HCT116 (cell line): ENCODE measurements at regions of chr5 and their contacts with region 1.

Region 1: GRCh38 chr5:116947691-116948528 is 373.3 kb upstream of the SEMA6A start:
- DNase-seq: peak; percentile 80
- ATAC-seq: peak; percentile 100
- H3K4me3 ChIP-seq: peak overlapping the region in 1 of 2 experiments; percentile 28; a peak in 1 of 4 replicates
- H3K27ac ChIP-seq: no peak overlapping the region
- H3K4me1 ChIP-seq: peaks cover 0 to 9% of the 10 kb centered on the region in 2 experiments; a peak in 2 of 4 replicates
- H3K27me3 ChIP-seq: no peaks in the 10 kb centered on the region
- CTCF ChIP-seq: peak; percentile 76 to 88 (median 85)
- POLR2A ChIP-seq: no peak
- RAD21 ChIP-seq: peak; percentile 85

Region 2: DNA sequence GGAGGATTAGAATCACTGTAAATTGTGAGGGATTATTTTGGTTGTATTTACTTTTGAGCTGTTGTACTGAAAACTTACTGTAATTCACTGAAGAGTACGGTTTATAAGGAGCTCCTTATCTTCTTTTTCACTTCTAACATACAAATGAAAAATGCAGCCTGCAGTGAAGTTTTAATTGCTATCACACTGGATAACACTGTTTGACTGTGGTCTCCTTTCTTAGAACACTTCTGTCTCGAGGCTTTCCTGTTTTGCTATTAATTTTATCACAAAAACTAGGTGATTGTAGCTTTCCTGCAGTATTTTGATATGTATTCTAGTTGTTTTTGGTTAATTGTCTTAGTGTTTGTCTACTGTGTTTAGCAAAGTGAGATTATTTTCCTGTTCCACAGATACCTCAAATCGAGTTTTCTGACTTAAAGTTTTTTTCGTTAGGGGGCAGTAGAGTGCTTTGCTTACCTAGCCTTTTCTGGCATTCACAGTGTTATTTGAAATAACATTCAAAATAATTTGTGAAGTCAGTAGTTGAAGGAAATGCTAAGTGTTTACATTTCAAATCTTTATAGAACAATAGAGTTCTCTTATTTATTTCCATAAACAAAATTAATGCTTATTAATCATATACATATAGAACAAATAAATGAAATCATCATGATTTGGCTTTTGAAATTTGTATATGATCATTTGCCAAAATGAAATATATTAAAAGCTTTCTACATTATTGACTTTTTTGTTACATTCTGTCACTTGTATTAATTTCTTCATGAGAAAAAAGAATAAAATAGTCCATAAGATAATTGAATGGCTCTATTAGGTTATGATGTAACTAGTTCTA is 810.1 kb before region 1 on chr5:
- CTCF ChIA-PET with region 1: no interaction called
- POLR2A ChIA-PET with region 1: no interaction called
- RAD21 ChIA-PET with region 1: no interaction called
- intact Hi-C with region 1: loop called (anchors 5 kb)
- DNase-seq: peak; percentile 41
- ATAC-seq: peak; percentile 66
- H3K4me3 ChIP-seq: no peak overlapping the region
- H3K27ac ChIP-seq: no peak overlapping the region
- H3K4me1 ChIP-seq: no peaks in the 10 kb centered on the region
- H3K27me3 ChIP-seq: no peaks in the 10 kb centered on the region
- CTCF ChIP-seq: peak; percentile 44 to 84 (median 68); a peak in 5 of 6 replicates
- POLR2A ChIP-seq: no peak
- RAD21 ChIP-seq: peak; percentile 82

Region 3: DNA sequence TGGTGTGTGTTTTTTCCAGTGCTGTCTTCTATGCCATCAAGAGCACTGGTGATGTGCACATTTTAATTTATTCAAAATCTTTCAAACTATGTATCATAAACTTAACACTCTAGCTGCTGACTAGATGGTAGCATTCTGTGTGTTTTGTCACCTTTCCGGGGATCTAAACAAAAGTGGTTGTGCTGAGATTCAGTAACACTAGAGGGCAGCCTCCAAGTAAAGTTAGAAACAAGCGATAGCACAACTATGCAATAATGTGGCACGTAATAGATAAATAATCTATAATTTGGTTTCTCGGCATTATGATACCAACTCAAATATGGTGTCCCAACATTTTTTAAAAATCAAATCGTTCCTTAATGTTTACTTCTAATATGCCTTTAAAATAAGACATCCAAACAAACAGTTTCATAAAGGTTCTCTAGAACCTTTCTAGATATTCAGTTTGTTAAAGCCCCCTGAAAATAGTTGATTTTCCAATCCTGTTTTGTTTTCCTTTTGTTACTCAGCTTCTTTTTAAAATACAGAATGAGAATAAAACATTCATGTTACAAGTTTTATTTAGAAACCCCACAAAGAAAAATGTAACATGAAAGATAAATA is 390.1 kb before region 1 on chr5:
- CTCF ChIA-PET with region 1: no interaction called
- POLR2A ChIA-PET with region 1: no interaction called
- RAD21 ChIA-PET with region 1: no interaction called
- intact Hi-C with region 1: loop called (anchors 5 kb)
- DNase-seq: no peak
- ATAC-seq: peak; percentile 77
- H3K4me3 ChIP-seq: no peak overlapping the region
- H3K27ac ChIP-seq: no peak overlapping the region
- H3K4me1 ChIP-seq: no peaks in the 10 kb centered on the region
- H3K27me3 ChIP-seq: no peaks in the 10 kb centered on the region
- CTCF ChIP-seq: peak; percentile 52 to 73 (median 66); a peak in 4 of 6 replicates
- POLR2A ChIP-seq: no peak
- RAD21 ChIP-seq: peak; percentile 72

Region 4: DNA sequence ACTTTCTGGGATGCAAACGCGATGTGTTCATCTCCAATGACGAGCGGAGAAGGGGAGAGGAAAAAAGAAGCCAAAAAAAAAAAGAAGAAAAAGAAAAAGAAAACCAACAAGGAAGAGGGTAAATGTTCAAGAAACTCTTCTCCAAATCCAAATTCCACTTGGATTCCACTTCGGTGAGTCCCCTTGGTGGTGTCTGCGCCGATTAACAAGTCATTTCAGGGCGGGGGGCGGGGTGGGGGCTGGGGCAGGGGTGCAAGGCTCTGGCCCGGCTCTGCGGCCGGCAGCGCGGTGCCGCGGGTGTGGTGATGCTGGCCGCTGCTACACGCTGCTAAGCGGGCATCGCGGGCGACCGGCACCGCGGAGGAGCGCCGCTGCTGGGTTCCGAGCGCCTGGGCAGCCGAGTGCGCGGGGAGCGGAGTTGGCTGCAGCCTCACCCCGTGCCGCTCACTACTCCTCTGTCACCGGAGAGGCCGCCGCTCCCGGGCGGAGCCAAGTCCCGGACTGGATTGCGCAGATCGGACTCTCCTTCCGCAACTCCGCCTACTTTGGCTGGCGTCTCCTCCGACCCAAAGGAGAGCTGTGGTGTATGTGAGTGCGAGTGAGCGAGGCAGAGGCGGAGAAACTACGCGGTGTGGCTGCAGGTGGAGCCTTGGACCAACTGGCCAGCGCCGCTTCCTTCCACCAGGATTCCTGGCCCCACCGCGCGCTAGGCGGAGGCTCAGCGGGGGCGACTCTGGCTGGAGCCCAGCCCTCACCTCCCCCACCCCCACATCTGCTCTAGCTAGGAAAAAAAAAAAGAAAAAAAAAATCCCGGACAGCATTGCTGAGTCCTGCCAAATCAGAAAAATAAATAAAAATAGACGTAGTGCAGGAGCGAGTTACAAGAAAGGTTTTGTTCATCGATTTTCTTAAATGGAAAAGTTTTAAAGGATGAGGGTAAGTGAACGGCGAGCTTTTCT is 373.3 kb before region 1 on chr5 and contains the start of gene SEMA6A:
- CTCF ChIA-PET with region 1: interaction called, 15 read pairs
- POLR2A ChIA-PET with region 1: interaction called, 3 read pairs
- RAD21 ChIA-PET with region 1: interaction called in 1 of 2 experiments, 10 read pairs
- intact Hi-C with region 1: loop called (anchors 1 kb)
- DNase-seq: peak; percentile 95
- ATAC-seq: peak; percentile 87
- H3K4me3 ChIP-seq: peak within 1 kb of the TSS; percentile 59 to 70
- H3K27ac ChIP-seq: peak within 1 kb of the TSS; percentile 40
- H3K4me1 ChIP-seq: peaks cover 8 to 21% of the 10 kb centered on the region in 2 experiments; a peak in 3 of 4 replicates
- H3K27me3 ChIP-seq: no peaks in the 10 kb centered on the region
- CTCF ChIP-seq: no peak
- POLR2A ChIP-seq: peak; percentile 48
- RAD21 ChIP-seq: peak; percentile 44
- total RNA-seq, gene SEMA6A: 6.7 TPM